HEK293 (cell line): ENCODE measurements at regions of chr6 and their contacts with region 1.

Region 1: DNA sequence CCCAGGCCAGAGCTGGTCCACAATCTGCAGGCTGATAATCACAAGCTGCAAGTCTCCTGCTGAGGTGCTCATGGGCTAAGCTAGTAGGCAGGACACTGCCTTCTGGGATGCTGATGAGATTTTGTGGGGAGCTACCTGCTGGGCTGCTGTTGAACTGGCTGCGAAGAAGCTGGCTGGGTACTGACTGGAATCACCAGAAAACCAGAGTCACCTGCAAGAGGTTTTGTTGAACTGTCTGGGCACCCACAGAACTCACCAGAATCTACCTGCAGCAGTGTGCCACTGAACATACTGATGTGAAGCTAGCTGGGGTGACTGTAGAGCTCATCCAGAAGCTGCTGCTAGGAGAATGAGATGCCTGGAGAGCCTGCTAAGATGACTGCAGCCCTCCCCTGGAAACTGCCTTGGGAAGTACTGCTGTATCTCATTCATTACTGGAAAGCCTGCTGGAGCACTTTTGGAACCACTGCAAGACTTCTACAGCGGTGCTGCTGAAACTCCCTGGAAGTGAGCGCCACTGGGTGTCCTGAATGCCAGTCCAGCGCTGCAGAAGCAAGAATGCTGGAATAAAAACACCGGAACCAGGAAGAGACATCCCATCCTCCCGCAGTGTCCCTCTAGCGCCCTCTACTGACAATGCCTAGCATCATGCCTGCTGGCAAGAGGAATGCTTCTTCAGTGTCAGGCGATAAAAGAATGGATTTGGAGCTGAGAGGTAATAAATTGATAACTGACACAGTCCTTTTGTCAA is 64.9 kb upstream of the ARHGAP18 start:
- H3K4me3 ChIP-seq: peak overlapping the region; percentile 7; the same call in 1 of the 2 replicates
- H3K27ac ChIP-seq: no peak overlapping the region
- H3K4me1 ChIP-seq: no peaks in the 10 kb centered on the region
- CTCF ChIP-seq: peak; percentile 78

Region 2: DNA sequence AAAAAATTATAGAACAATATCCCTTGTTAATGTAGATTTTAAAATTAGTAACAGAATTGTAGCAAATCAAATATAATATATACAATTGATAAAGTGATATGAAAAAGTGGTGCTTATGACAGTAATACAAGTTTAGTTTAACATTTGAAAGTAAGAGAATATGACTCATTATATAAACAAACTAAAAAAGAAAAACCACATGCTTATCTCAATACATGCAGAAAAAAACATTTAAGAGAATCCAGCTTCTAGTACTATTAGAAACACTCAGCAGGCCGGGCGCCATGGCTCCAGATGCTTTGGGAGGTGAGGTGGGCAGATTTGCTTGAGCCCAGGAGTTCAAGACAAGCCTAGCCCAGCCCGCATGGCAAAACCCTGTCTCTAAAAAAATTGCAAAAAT is 952.6 kb before region 1 on chr6:
- CTCF ChIA-PET with region 1: no interaction called
- POLR2A ChIA-PET with region 1: no interaction called
- H3K4me3 ChIP-seq: no peak overlapping the region
- H3K27ac ChIP-seq: no peak overlapping the region
- H3K4me1 ChIP-seq: peaks cover 3% of the 10 kb centered on the region; the same call in 1 of the 2 replicates
- CTCF ChIP-seq: no peak

Region 3: GRCh38 chr6:129709769-129710449 is 65.0 kb before region 1 on chr6 and contains the start of gene ARHGAP18:
- CTCF ChIA-PET with region 1: interaction called, 11 read pairs
- POLR2A ChIA-PET with region 1: no interaction called
- H3K4me3 ChIP-seq: peak within 1 kb of the TSS; percentile 39
- H3K27ac ChIP-seq: peak within 1 kb of the TSS; percentile 37
- H3K4me1 ChIP-seq: peaks cover 3% of the 10 kb centered on the region; the same call in 1 of the 2 replicates
- CTCF ChIP-seq: no peak

Region 4: DNA sequence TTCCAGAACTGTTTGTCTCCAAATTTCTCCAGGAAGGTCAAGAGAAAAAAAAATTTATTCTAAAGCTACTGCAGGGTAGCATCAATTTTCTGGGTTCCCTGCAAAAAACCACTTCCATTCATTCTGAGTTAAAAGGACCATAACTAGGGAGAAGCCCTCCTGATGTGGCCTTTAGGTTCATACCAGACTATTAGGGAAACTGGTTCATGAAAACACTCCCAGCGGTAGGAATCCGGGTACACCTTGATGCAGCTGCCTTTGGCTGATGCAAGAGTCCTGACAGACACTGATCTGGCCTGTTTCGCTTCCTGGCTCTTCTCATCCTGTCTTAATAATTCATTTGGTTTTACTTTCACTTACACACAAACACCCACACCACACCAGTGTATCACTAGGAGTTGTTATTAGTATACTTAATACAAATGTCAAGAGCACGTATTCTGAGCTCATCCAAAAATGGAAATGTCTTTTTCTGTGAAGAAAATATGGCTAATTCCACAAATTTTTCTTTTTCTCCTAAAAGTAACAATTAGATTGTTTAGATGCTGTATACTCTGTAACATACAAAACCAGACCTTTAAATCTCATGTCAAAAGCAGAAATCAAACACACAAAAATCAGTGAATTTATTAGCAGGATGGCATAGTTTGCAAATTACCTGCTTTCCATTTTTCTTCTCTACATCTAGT is 26.5 kb before region 1 on chr6:
- CTCF ChIA-PET with region 1: interaction called, 17 read pairs
- POLR2A ChIA-PET with region 1: no interaction called
- H3K4me3 ChIP-seq: no peak overlapping the region
- H3K27ac ChIP-seq: no peak overlapping the region
- H3K4me1 ChIP-seq: peaks cover 17% of the 10 kb centered on the region
- CTCF ChIP-seq: no peak

Region 5: DNA sequence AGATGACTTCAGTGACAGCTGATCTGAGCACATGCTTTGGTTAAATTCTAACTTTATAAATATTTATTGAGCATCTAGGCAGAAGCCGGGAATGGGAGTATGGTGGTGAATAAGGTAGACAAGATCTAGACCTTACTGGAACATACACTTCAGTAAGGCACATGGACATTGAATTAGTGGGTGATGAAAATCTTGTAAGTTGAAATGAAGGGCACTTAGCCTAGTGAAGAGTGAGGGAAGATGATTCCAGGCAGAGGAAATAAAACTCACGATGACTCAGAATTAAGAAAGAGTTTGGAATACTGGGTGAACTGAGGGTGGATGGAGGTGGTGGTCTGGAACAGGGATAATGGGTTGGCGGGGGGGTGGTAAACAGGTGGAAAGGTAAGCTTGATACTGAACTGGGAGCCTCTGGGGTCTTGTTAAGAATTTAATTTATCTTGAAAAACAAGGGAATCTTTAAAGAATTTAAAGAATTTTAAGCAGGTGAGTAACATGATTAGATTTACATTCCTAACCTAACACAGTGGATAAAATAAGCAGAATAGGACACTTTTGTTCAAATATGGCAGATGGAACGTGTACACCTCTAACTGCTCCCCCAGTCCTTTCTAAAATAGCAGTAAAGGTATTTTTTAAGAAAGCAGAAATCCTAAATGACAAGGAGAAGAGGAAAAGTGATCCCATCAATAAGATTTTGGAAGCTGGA is 10.3 kb after region 1 on chr6:
- CTCF ChIA-PET with region 1: interaction called, 100 read pairs
- POLR2A ChIA-PET with region 1: interaction called, 3 read pairs
- H3K4me3 ChIP-seq: no peak overlapping the region
- H3K27ac ChIP-seq: no peak overlapping the region
- H3K4me1 ChIP-seq: no peaks in the 10 kb centered on the region
- CTCF ChIP-seq: no peak

Region 6: DNA sequence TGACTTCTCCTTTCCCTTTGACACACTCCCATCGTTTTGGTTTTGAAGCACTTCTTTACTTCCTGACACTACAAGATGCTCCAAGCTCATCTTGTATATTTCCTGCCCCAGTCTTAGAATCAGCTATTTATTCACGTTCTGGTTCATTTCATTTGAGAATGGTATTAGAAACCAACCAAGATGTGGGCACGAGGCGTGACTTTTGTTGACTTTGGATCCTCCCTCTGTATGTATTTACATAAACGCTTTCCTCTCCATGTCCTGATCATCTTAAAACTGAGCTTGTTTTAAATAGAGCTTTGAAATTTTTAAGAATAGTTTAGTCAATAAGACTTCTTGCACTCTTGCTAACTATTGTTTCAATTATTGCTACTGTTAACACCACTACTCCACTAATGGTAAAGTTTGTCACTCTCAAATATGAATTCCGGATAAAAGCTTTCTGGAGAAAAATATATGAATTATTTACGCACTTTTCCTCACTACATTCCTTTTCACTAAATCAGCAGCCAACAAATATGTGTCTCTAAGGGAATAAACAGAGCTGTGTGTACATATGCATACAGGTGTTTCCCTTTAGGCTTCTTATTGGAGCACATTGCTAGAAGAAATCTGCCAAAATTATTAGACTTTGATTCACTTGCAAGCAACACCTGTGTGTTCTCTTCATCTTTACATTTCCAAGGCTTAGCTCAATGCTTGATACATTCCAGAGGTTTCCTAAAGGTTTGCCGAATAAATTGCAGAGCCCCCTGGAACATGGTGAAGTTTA is 163.6 kb after region 1 on chr6:
- CTCF ChIA-PET with region 1: interaction called, 18 read pairs
- POLR2A ChIA-PET with region 1: no interaction called
- H3K4me3 ChIP-seq: no peak overlapping the region
- H3K27ac ChIP-seq: no peak overlapping the region
- H3K4me1 ChIP-seq: no peaks in the 10 kb centered on the region
- CTCF ChIP-seq: no peak

Region 7: DNA sequence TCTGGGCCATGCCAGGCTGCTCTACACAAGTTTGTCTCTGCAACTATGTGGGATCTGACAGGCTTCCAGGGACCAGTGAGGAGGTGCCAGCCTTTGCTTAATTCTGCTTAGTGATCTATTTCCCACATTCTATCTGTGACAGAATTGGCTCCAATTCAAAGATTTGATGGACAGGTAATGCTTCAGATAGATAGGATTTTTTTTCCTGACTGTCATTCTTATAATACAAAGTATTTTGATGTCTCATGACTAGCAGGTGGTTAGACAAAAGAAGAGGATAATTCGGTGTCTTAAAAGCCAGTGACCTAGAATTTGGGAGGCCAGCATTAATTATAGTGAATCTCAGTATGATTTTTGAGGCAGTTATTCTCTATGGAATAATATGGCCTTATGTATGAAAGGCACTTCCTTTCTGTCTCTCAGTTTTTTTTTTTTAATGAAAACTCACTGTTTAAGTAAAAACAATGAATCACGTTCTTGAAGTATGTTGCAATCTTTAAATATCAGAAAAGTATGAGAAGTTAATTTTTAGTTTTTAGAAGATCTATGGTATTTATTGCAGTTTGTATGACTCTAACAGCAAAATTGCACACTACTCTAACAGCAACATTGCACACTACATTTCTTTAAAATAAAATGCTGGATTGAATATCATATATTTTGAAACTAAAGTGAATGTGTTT is 634.7 kb after region 1 on chr6:
- CTCF ChIA-PET with region 1: no interaction called
- POLR2A ChIA-PET with region 1: no interaction called
- H3K4me3 ChIP-seq: no peak overlapping the region
- H3K27ac ChIP-seq: no peak overlapping the region
- H3K4me1 ChIP-seq: no peaks in the 10 kb centered on the region
- CTCF ChIP-seq: no peak